ENCODE measurements at regions of chr12 and their contacts with region 1.

Region 1: GRCh38 chr12:122500685-122501488 is at the start of gene ZCCHC8:
- DNase-seq: peak; percentile 95 to 97
- ATAC-seq: peak; percentile 86 to 90
- H3K4me3 ChIP-seq: peak within 1 kb of the TSS; percentile 77 to 83 (median 79)
- H3K27ac ChIP-seq: peak within 1 kb of the TSS; percentile 98 to 99 (median 98)
- H3K4me1 ChIP-seq: peaks cover 25 to 28% of the 10 kb centered on the region in 2 donors
- H3K27me3 ChIP-seq: no peaks in the 10 kb centered on the region
- CTCF ChIP-seq: peak in 2 of 5 experiments; percentile 23 to 34
- POLR2A ChIP-seq: peak; percentile 91 to 97
- total RNA-seq, gene ZCCHC8: 12.1 to 23.3 (median 20.5) TPM

Region 2: DNA sequence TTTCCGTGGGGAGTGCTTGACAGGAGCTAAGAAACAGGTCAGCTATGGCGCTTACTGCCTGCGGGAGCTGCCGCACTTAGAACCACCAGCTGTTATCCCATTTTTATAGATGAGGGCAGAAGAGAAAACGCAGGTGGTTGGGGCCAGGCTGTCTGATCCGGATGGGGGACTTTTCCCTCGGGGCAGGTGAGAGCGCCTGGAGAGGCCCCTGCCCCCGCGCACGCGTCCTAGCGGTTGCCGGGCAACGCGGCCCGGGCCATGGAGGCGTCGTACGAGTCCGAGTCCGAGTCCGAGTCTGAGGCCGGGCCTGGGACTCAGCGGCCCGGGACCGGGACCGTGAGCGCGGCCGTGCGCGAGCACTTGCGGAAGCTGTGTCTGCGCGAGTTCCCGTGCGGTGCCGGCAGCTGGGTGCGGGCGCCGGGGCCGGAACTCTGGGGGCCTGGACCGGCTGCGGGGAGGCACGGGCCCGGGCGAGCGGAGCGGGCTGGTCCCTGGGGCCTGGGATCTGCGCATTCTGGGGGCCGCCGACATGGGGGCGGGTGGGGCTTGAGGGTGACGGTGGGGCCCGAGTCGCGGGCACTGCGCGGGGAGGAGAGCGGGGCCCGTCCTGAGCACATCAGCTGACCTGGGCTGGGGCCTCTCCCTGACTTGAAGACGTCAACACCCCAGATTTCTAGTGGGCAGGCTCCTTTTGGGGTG is 317.9 kb before region 1 on chr12 and contains the start of gene LRRC43:
- in situ Hi-C with region 1: no loop called
- intact Hi-C with region 1: no loop called
- DNase-seq: no peak
- ATAC-seq: peak; percentile 26 to 30
- H3K4me3 ChIP-seq: peak within 1 kb of the TSS; percentile 39 to 64 (median 53)
- H3K27ac ChIP-seq: no peak within 1 kb of the TSS
- H3K4me1 ChIP-seq: no peaks in the 10 kb centered on the region
- H3K27me3 ChIP-seq: peaks cover 0 to 10% (median 0%) of the 10 kb centered on the region in 3 donors
- CTCF ChIP-seq: no peak
- POLR2A ChIP-seq: no peak
- total RNA-seq, gene LRRC43: not detected

Region 3: DNA sequence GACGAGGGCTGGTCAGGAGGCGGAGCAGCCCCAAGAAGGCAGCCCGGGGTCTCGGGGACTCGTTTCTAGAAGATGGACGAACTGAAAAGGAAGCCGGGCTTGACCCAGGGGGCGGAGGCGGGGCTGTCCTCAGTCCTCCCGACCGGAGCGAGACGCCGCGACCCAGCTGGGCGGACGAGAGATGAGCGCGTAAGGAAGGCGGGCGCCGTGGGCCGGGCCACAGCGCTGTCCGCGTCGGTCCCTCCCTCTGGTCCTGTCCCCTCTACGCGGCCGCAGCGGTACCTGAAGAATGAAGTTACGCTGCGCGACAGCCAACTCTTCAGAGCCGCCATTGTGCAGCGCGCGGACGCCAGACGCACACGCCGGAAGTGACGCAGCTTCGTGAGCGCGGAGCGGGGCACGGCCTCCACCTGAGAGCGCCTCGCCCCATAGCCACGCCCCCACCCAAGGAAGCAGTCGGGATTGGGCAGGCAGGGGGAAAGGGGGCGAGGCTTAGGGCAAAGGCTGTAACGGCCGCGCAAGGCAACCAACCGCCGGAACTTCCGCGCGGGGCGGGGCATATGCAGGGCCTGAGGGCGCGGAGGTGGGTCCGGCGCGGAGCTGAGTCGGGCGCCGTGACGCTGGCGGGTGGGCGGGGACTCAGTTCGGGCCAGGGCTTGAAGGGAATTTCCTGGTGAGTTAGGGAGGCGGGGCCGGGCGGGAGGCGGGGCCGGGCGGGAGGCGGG is 275.0 kb before region 1 on chr12 and contains the start of gene DIABLO:
- in situ Hi-C with region 1: no loop called
- intact Hi-C with region 1: loop called (anchors 2 kb)
- DNase-seq: peak; percentile 99 to 100
- ATAC-seq: peak; percentile 92 to 97
- H3K4me3 ChIP-seq: peak within 1 kb of the TSS; percentile 87 to 98 (median 94)
- H3K27ac ChIP-seq: peak within 1 kb of the TSS; percentile 92 to 98 (median 96)
- H3K4me1 ChIP-seq: peaks cover 19 to 21% of the 10 kb centered on the region in 2 donors
- H3K27me3 ChIP-seq: no peaks in the 10 kb centered on the region
- CTCF ChIP-seq: no peak
- POLR2A ChIP-seq: peak; percentile 90 to 98
- total RNA-seq, gene DIABLO: 32.8 to 63.8 (median 44.5) TPM

Region 4: GRCh38 chr12:122526683-122527477 is 26.0 kb after region 1 on chr12 and contains the starts of genes KNTC1 and RSRC2:
- in situ Hi-C with region 1: no loop called
- intact Hi-C with region 1: loop called (anchors 1 kb)
- DNase-seq: peak; percentile 99
- ATAC-seq: peak; percentile 98
- H3K4me3 ChIP-seq: peak within 1 kb of the TSS; percentile 76 to 94 (median 90)
- H3K27ac ChIP-seq: peak within 1 kb of the TSS; percentile 88 to 99 (median 95)
- H3K4me1 ChIP-seq: peaks cover 37 to 45% of the 10 kb centered on the region in 2 donors
- H3K27me3 ChIP-seq: no peaks in the 10 kb centered on the region
- CTCF ChIP-seq: no peak
- POLR2A ChIP-seq: peak; percentile 97
- total RNA-seq, gene KNTC1: 1.3 to 5.3 (median 2.2) TPM
- total RNA-seq, gene RSRC2: 43.5 to 58.8 (median 44.9) TPM

Region 5: GRCh38 chr12:122752464-122753318 is 251.8 kb after region 1 on chr12 and contains the start of gene DENR:
- in situ Hi-C with region 1: loop called in 1 of 4 experiments (anchors 25 kb)
- intact Hi-C with region 1: loop called (anchors 1 kb)
- DNase-seq: peak; percentile 96 to 97
- ATAC-seq: peak; percentile 97 to 99
- H3K4me3 ChIP-seq: peak within 1 kb of the TSS; percentile 74 to 98 (median 92)
- H3K27ac ChIP-seq: peak within 1 kb of the TSS; percentile 83 to 93 (median 90)
- H3K4me1 ChIP-seq: peaks cover 6 to 16% of the 10 kb centered on the region in 2 donors
- H3K27me3 ChIP-seq: no peaks in the 10 kb centered on the region
- CTCF ChIP-seq: peak; percentile 49 to 84 (median 79)
- POLR2A ChIP-seq: peak; percentile 73 to 82
- total RNA-seq, gene DENR: 16.1 to 26.2 (median 23.5) TPM

Region 6: GRCh38 chr12:123305136-123305535 is 804.2 kb after region 1 on chr12:
- in situ Hi-C with region 1: loop called in 1 of 4 experiments (anchors 25 kb)
- intact Hi-C with region 1: no loop called
- DNase-seq: no peak
- ATAC-seq: no peak
- H3K4me3 ChIP-seq: no peak overlapping the region
- H3K27ac ChIP-seq: no peak overlapping the region
- H3K4me1 ChIP-seq: no peaks in the 10 kb centered on the region
- H3K27me3 ChIP-seq: no peaks in the 10 kb centered on the region
- CTCF ChIP-seq: no peak
- POLR2A ChIP-seq: no peak

Region 7: DNA sequence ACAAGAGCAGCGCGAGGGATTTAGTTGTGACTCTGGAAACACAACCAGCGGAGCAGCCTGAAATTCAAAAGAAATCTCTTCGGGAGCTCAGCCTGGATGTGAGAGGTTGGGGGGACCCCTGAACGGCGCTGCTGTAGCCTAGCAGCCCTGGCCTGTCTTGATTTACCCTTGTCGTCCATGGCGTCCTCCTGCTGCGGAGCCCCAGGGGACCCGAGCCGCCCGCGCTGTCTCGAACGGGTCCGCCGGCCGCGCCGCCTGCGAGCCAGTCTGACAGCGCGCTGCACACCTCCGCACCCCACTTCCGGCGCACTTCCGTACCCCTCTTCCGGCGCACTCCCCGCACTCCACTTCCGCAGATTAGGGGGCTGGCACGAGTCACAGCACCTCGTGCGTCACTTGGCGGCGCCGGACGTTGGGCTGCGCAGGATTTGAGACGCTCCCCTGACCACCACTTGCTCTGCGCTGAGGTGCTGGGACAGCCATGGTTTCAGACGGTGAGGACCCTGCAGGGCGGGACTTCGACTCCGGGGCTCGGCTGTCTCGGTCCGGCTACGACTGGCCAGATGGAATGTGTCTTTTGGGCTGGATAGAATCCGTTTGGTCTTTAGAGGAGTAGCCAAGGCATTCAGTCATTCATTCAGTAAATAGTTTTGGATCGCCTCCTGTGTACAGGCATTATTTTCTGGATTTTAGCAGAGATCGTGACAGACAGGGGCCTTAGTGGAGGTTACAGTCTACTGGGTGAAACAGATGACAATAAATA is 1132.7 kb after region 1 on chr12 and contains the starts of genes EIF2B1 and GTF2H3:
- in situ Hi-C with region 1: loop called in 1 of 4 experiments (anchors 25 kb)
- intact Hi-C with region 1: no loop called
- DNase-seq: peak; percentile 92 to 96
- ATAC-seq: peak; percentile 99
- H3K4me3 ChIP-seq: peak within 1 kb of the TSS; percentile 86 to 97 (median 95)
- H3K27ac ChIP-seq: peak within 1 kb of the TSS; percentile 74 to 89 (median 84)
- H3K4me1 ChIP-seq: peaks cover 12% of the 10 kb centered on the region in 2 donors
- H3K27me3 ChIP-seq: no peaks in the 10 kb centered on the region
- CTCF ChIP-seq: peak in 2 of 5 experiments; percentile 14 to 20
- POLR2A ChIP-seq: peak; percentile 63 to 85
- total RNA-seq, gene EIF2B1: 84.5 to 118 (median 112) TPM
- total RNA-seq, gene GTF2H3: 11.5 to 14.3 (median 12.3) TPM